Activated CD4-positive, alpha-beta T cell treated with anti-CD3 and anti-CD28 coated beads for 36 hours (primary cell): ENCODE measurements at regions of chr4 and their contacts with region 1.

Region 1: GRCh38 chr4:7101692-7102515 is 34.0 kb upstream of the GRPEL1 start:
- DNase-seq: peak; percentile 78
- ATAC-seq: peak; percentile 74
- H3K4me3 Mint-ChIP-seq: peak overlapping the region; percentile 84
- H3K27ac Mint-ChIP-seq: no peak overlapping the region
- H3K4me1 Mint-ChIP-seq: peaks cover 8% of the 10 kb centered on the region
- H3K27me3 Mint-ChIP-seq: no peaks in the 10 kb centered on the region

Region 2: GRCh38 chr4:6153874-6154273 is 948.0 kb before region 1 on chr4:
- CTCF ChIA-PET with region 1: no interaction called
- POLR2A ChIA-PET with region 1: no interaction called
- intact Hi-C with region 1: no loop called
- DNase-seq: no peak
- ATAC-seq: no peak
- H3K4me3 Mint-ChIP-seq: no peak overlapping the region
- H3K27ac Mint-ChIP-seq: no peak overlapping the region
- H3K4me1 Mint-ChIP-seq: peaks cover 11% of the 10 kb centered on the region
- H3K27me3 Mint-ChIP-seq: peaks cover 2% of the 10 kb centered on the region

Region 3: DNA sequence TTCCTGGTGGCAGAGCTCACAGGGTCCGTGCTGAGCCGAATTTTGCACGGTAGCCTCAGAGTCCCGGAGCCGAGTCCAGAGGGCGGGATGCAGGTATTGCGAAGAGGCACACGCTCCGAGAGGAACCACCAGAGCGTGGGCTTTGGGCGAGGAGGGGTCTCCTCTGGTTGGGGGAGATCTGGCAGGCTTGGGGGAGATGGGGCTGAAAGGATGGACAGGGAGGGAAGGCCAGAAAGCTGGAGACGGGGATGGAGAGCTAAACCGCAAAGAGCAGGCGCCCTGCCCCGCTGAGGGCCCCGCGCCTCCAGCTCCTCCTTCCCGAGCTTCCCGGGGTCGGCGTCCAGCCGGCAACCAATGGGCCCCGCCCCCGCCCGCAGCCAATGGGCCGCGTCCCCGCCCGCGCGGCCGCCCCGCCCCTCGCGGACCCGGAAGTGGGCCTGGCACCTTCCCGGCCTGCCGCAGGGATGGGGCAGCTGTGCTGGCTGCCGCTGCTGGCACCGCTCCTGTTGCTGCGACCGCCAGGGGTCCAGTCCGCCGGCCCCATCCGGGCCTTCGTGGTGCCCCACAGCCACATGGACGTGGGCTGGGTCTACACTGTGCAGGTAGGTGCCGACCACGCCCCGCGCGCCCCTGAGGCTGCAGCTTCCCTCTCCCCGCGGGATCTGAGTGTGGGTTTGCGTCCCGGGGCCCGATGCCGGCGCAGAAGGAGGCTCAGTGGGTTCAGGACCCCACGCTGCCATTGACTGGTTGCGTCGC is 527.0 kb before region 1 on chr4 and contains the start of gene MAN2B2:
- CTCF ChIA-PET with region 1: interaction called, 3 read pairs
- POLR2A ChIA-PET with region 1: no interaction called
- intact Hi-C with region 1: loop called in 1 of 2 experiments (anchors 1 kb)
- DNase-seq: peak; percentile 89
- ATAC-seq: peak; percentile 96
- H3K4me3 Mint-ChIP-seq: peak within 1 kb of the TSS; percentile 78
- H3K27ac Mint-ChIP-seq: peak within 1 kb of the TSS; percentile 74
- H3K4me1 Mint-ChIP-seq: peaks cover 6% of the 10 kb centered on the region
- H3K27me3 Mint-ChIP-seq: no peaks in the 10 kb centered on the region
- total RNA-seq, gene MAN2B2: 13.0 to 14.6 TPM

Region 4: GRCh38 chr4:6673660-6674499 is 428.0 kb before region 1 on chr4:
- CTCF ChIA-PET with region 1: no interaction called
- POLR2A ChIA-PET with region 1: no interaction called
- intact Hi-C with region 1: no loop called
- DNase-seq: peak; percentile 96
- ATAC-seq: peak; percentile 77
- H3K4me3 Mint-ChIP-seq: peak overlapping the region; percentile 93
- H3K27ac Mint-ChIP-seq: peak overlapping the region; percentile 99
- H3K4me1 Mint-ChIP-seq: peaks cover 40% of the 10 kb centered on the region
- H3K27me3 Mint-ChIP-seq: no peaks in the 10 kb centered on the region

Region 5: GRCh38 chr4:7134737-7135388 is 33.0 kb after region 1 on chr4:
- CTCF ChIA-PET with region 1: no interaction called
- POLR2A ChIA-PET with region 1: no interaction called
- intact Hi-C with region 1: no loop called
- DNase-seq: no peak
- ATAC-seq: peak; percentile 19
- H3K4me3 Mint-ChIP-seq: no peak overlapping the region
- H3K27ac Mint-ChIP-seq: no peak overlapping the region
- H3K4me1 Mint-ChIP-seq: no peaks in the 10 kb centered on the region
- H3K27me3 Mint-ChIP-seq: no peaks in the 10 kb centered on the region

Region 6: GRCh38 chr4:7183161-7183560 is 81.3 kb after region 1 on chr4:
- CTCF ChIA-PET with region 1: no interaction called
- POLR2A ChIA-PET with region 1: no interaction called
- intact Hi-C with region 1: loop called in 1 of 2 experiments (anchors 5 kb)
- DNase-seq: peak; percentile 74
- ATAC-seq: peak; percentile 99
- H3K4me3 Mint-ChIP-seq: no peak overlapping the region
- H3K27ac Mint-ChIP-seq: peak overlapping the region; percentile 63
- H3K4me1 Mint-ChIP-seq: peaks cover 13% of the 10 kb centered on the region
- H3K27me3 Mint-ChIP-seq: peaks cover 16% of the 10 kb centered on the region

Region 7: GRCh38 chr4:7254736-7255487 is 153.0 kb after region 1 on chr4:
- CTCF ChIA-PET with region 1: no interaction called
- POLR2A ChIA-PET with region 1: no interaction called
- intact Hi-C with region 1: no loop called
- DNase-seq: no peak
- ATAC-seq: no peak
- H3K4me3 Mint-ChIP-seq: no peak overlapping the region
- H3K27ac Mint-ChIP-seq: no peak overlapping the region
- H3K4me1 Mint-ChIP-seq: no peaks in the 10 kb centered on the region
- H3K27me3 Mint-ChIP-seq: peaks cover 2% of the 10 kb centered on the region

Region 8: DNA sequence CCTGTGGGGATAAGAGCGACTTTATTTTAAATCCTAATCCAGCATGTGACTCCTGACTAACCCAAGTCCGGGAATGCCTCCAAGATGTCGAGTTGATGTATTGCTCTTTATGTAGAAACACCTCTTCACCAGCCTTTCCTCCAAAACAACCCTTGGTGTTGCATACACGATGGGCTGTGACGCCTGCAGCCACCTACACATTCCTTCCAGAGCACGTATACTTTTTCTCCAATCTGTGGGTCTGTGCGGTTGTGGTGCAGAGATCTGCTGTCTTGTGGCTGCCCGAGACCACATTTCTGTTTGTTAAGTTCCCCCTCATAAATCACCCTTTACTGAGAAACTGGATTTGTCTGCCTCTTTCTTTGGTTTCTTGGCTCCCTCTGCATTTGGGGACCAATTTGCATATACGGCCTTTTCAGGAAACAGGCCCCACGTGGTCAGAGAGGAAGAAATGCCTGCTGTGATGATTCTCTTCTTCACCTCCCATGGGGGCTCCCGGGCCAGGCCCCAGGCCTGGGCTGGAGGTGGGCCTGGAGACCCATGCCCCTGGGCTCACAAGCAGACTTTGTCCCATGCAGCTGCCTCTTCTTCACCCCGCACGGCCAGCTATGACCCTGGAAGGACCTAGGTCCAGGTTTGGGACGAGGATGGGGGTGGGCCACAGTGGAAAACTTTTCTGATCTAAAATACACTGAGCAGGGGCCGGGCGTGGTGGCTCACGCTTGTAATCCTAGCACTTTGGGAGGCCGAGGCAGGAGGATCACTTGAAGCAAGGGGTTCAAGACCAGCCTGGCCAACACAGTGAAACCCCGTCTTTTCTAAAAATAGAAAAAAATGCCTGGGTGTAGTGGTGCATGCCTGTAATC is 859.1 kb after region 1 on chr4:
- CTCF ChIA-PET with region 1: no interaction called
- POLR2A ChIA-PET with region 1: no interaction called
- intact Hi-C with region 1: loop called in 1 of 2 experiments (anchors 1 kb)
- DNase-seq: peak; percentile 91
- ATAC-seq: peak; percentile 73
- H3K4me3 Mint-ChIP-seq: peak overlapping the region; percentile 51
- H3K27ac Mint-ChIP-seq: peak overlapping the region; percentile 91
- H3K4me1 Mint-ChIP-seq: peaks cover 62% of the 10 kb centered on the region
- H3K27me3 Mint-ChIP-seq: peaks cover 5% of the 10 kb centered on the region